A673 (cell line): ENCODE measurements at regions of chr4 and their contacts with region 1.

Region 1: GRCh38 chr4:170853422-170854021 is 763.8 kb upstream of the AADAT start:
- DNase-seq: peak; percentile 68
- H3K4me3 ChIP-seq: no peak overlapping the region
- H3K27ac ChIP-seq: no peak overlapping the region
- H3K4me1 ChIP-seq: no peaks in the 10 kb centered on the region
- H3K27me3 ChIP-seq: no peaks in the 10 kb centered on the region
- CTCF ChIP-seq: peak; percentile 92

Region 2: DNA sequence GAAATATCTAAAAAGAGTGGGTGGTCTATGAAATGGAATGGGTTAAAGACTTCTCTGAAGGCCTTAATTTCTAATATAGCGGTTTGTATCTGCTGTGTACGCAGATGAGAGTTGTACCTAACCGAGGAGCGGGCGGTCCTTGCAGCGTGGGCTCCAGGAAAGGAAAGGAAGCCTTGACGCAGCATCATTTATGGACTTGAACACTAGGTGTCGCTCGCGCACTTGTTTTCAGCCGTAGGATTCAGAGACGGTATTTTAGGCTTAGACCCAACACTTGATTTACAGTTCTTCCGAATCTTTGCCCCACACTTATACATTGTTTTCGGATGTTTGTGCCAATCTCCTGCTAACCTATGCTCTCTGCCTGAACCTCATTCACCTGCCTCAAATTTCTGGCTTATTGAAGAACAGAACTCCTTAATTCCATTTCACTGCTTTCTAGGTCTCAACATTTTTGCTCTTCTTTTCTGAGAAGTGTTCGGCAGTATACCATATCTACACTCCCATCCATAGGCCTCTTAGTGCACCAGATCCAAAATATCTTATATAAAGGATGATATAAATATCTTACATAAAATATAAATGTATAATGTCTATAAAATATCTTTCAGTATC is 714.8 kb before region 1 on chr4:
- CTCF ChIA-PET with region 1: no interaction called
- POLR2A ChIA-PET with region 1: no interaction called
- intact Hi-C with region 1: loop called (anchors 5 kb)
- DNase-seq: peak; percentile 84
- H3K4me3 ChIP-seq: no peak overlapping the region
- H3K27ac ChIP-seq: no peak overlapping the region
- H3K4me1 ChIP-seq: no peaks in the 10 kb centered on the region
- H3K27me3 ChIP-seq: peaks cover 7% of the 10 kb centered on the region
- CTCF ChIP-seq: peak; percentile 80

Region 3: DNA sequence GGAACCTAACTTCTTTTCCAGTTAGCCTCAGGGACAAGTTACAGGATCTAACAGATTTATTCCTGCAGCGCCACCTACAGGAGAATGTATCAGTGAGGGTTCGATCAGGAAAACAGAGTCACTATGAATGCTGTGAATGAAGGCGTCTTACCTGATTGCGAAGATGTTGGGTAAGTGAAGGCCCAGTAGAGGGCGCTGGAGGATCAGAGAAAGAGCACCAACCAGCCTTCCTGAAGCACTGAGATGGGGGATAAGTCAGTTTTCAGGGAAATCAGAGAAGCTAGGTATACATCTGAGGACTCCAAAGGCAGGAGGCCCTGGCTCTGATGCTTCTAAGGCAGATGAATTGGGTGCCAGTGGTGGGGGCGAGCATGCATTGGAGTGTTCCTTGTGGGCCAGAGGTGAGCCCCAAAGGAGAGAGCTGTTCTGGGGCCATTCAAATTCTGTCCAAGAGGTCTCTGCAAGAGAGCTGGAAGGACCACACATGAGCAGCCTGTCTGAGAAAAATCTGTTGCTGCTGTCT is 593.8 kb before region 1 on chr4:
- CTCF ChIA-PET with region 1: interaction called, 3 read pairs
- POLR2A ChIA-PET with region 1: no interaction called
- intact Hi-C with region 1: loop called (anchors 1 kb)
- DNase-seq: peak; percentile 95
- H3K4me3 ChIP-seq: no peak overlapping the region
- H3K27ac ChIP-seq: no peak overlapping the region
- H3K4me1 ChIP-seq: no peaks in the 10 kb centered on the region
- H3K27me3 ChIP-seq: peaks cover 19% of the 10 kb centered on the region
- CTCF ChIP-seq: peak; percentile 99

Region 4: GRCh38 chr4:170589597-170590191 is 263.8 kb before region 1 on chr4:
- CTCF ChIA-PET with region 1: no interaction called
- POLR2A ChIA-PET with region 1: no interaction called
- intact Hi-C with region 1: loop called (anchors 2 kb)
- DNase-seq: peak; percentile 19
- H3K4me3 ChIP-seq: no peak overlapping the region
- H3K27ac ChIP-seq: no peak overlapping the region
- H3K4me1 ChIP-seq: no peaks in the 10 kb centered on the region
- H3K27me3 ChIP-seq: no peaks in the 10 kb centered on the region
- CTCF ChIP-seq: no peak